K562 (cell line): ENCODE measurements at regions of chr2 and their contacts with region 1.

Region 1: GRCh38 chr2:170940066-170940465 is 11.0 kb downstream of the GORASP2 start:
- DNase-seq: no peak
- ATAC-seq: peak; percentile 36
- H3K4me3 ChIP-seq: no peak overlapping the region
- H3K27ac ChIP-seq: no peak overlapping the region
- H3K4me1 ChIP-seq: peaks cover 3% of the 10 kb centered on the region in 2 experiments; a peak in 3 of 5 replicates
- H3K27me3 ChIP-seq: no peaks in the 10 kb centered on the region
- CTCF ChIP-seq: no peak
- EP300 ChIP-seq: no peak
- POLR2A ChIP-seq: no peak
- RAD21 ChIP-seq: no peak

Region 2: DNA sequence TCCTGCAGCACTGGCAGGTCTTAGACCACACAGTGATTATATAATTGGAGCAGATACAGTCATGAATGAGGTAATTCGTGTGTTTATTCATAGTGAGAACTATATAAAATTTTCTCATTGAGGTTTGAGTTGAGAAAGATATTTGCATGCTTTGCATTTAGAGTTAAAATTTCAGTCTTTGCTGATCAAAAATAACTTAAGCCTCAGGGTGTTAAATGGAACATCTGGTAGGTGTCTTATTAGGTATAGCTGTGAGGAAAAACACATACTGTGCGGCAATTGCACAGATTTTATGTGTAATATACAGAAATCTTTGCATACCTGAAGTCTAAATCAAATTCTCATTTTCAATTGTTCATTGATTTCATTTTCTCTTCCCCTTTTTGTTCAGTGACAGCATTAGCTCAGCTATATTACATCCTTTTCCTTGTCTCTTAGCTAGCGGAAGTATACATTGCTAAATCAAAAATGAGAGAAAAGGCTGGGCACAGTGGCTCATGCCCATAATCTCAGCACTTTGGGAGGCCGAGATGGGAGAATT is 10.2 kb after region 1 on chr2:
- CTCF ChIA-PET with region 1: interaction called, 3 read pairs
- POLR2A ChIA-PET with region 1: interaction called, 10 read pairs
- in situ Hi-C with region 1: no loop called
- intact Hi-C with region 1: no loop called
- DNase-seq: no peak
- ATAC-seq: no peak
- H3K4me3 ChIP-seq: no peak overlapping the region
- H3K27ac ChIP-seq: no peak overlapping the region
- H3K4me1 ChIP-seq: no peaks in the 10 kb centered on the region
- H3K27me3 ChIP-seq: no peaks in the 10 kb centered on the region
- CTCF ChIP-seq: no peak
- EP300 ChIP-seq: no peak
- POLR2A ChIP-seq: no peak
- RAD21 ChIP-seq: no peak